ENCODE measurements at regions of chr3 and their contacts with region 1.

Region 1: DNA sequence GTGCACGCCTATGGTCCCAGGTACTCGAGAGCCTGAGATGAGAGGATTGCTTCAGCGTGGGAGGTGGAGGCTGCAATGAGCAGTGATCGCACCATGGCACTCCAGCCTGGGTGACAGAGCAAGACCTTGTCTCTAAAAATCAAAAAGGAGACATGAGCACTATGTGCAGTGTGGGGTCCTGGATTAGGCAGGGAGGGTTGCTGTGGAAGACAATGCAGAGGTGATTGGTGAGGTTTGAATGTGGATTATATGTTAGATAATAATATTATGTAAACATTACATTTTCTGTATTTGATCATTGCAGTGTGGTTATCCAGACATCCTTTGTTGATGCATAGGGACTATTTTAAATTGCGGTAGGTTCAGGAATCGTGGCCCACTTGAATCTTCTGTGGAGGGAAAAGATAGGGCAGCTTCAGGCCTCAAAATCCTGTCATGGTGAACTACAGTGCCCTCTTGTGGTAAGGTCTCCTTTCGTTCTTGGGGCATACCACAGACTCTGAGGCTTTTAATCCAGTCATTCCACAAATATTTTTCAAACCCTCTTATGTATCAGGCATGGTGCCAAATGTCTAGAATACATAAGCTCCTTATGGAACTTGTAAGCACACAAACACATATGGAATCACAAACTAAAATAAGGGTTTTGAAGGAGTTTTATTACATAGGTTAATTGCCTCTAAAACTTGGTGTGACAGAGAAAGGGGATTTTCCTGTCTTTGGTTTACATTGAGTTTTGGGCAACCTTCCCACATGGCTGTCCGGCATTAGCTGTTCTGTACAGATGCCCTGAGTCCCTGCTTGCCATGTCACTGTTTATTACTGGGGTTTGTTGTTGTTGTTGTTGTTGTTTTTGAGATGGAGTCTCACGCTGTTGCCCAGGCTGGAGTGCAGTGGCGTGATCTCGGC is 37.7 kb downstream of the GPD1L start:
- DNase-seq: peak in 3 of 6 donors; percentile 21 to 59 (median 32)
- ATAC-seq: peak in 3 of 4 donors; percentile 89 to 94 (median 90)
- H3K4me3 ChIP-seq: no peak overlapping the region
- H3K27ac ChIP-seq: no peak overlapping the region
- H3K4me1 ChIP-seq: no peaks in the 10 kb centered on the region
- H3K27me3 ChIP-seq: no peaks in the 10 kb centered on the region
- CTCF ChIP-seq: peak; percentile 25 to 66 (median 58)

Region 2: DNA sequence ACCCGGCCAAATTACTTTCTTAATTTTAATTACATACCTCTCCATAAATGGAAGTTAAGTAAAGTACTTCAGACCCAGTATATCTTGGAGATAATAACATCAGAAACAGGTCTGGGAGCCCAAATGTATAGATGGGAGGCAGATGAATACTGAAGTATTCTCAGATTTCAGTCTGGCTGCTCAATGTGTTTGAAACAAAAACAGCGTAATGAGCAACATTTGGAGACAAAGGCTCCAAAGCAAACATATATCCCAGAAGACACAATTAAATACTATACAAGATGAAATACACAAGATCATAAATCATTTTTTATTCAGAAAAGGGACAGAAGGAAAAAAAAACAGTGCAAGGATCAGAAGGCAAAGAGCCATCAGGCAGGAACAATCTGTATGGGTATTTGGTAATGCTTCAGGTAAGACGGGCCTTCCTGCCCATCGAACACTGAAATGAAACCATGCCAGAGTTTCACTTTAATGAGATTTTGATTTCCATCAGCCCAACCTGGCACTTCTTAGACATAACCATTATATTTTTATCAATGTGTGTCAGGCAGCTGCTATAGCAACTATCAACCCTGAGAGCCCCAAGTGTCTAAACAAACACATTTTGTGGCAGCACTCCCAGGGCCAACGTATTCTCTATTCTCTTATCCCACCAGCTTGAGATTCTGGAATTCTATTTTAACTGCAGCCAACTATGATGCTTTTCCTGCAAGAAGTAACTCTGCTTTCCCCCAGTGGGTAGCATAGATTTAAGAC is 400.6 kb before region 1 on chr3:
- intact Hi-C with region 1: no loop called
- DNase-seq: no peak
- ATAC-seq: peak in 3 of 4 donors; percentile 22 to 55 (median 51)
- H3K4me3 ChIP-seq: no peak overlapping the region
- H3K27ac ChIP-seq: no peak overlapping the region
- H3K4me1 ChIP-seq: no peaks in the 10 kb centered on the region
- H3K27me3 ChIP-seq: no peaks in the 10 kb centered on the region
- CTCF ChIP-seq: no peak

Region 3: DNA sequence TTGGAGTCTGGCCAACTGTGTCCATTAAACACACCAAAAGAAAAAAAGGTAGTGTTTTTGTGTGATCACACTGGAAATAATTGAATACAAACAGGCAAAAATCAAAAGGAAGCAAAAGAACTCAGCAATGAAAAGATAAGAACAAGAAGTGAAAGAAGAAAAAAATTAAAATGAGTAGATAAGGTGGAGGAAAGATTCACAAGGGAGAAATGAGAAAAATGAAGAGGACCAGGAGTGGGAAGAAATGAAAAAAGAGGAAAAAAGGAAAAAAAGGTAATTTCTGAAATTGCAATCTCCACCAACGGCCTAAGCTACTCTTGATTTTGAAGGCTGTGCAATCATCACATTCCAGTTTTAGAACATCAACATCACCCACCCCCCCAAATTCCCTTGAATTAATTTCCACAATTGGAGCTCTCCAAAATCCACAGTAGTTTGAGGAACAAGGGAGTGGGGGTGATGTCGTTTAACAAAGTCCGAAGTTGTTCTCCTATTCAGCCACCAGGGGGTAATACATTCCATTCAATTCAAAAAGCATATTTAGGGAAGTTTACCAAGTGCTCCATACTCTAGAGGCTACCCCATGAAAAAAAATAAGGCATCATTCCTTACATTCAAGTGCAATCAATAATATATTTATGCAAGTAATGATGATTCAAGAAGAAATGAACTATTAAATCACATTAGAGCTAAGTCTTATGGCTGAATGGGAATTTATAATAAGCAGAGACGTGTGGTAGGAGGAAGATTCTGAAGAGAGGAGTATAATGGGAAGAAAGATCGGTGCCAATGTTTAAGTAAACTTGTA is 125.1 kb before region 1 on chr3:
- intact Hi-C with region 1: loop called in 2 of 3 experiments (anchors 5 to 10 kb)
- DNase-seq: no peak
- ATAC-seq: peak; percentile 69 to 97 (median 95)
- H3K4me3 ChIP-seq: no peak overlapping the region
- H3K27ac ChIP-seq: no peak overlapping the region
- H3K4me1 ChIP-seq: no peaks in the 10 kb centered on the region
- H3K27me3 ChIP-seq: no peaks in the 10 kb centered on the region
- CTCF ChIP-seq: peak; percentile 37 to 65 (median 52)

Region 4: DNA sequence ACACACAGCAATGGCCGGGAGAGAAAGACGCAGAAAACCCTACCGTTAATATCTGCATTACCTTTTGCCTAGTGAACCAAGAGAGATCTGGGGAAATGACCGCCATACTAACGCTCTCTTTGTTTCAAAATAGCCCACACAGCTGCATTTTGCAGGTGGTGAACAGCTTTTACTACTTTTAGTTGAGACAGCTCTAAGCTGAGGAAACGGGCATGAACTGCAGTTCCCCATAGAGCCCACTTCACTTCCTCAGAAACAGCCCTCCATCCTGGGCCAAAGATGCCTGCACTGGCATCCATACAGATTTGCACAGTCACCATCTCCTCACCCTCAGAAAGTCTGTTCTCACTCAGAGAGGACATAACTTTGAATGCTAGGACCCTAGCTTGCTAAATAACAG is 117.5 kb before region 1 on chr3:
- intact Hi-C with region 1: loop called in 1 of 3 experiments (anchors 10 kb)
- DNase-seq: no peak
- ATAC-seq: no peak
- H3K4me3 ChIP-seq: no peak overlapping the region
- H3K27ac ChIP-seq: no peak overlapping the region
- H3K4me1 ChIP-seq: no peaks in the 10 kb centered on the region
- H3K27me3 ChIP-seq: no peaks in the 10 kb centered on the region
- CTCF ChIP-seq: no peak

Region 5: DNA sequence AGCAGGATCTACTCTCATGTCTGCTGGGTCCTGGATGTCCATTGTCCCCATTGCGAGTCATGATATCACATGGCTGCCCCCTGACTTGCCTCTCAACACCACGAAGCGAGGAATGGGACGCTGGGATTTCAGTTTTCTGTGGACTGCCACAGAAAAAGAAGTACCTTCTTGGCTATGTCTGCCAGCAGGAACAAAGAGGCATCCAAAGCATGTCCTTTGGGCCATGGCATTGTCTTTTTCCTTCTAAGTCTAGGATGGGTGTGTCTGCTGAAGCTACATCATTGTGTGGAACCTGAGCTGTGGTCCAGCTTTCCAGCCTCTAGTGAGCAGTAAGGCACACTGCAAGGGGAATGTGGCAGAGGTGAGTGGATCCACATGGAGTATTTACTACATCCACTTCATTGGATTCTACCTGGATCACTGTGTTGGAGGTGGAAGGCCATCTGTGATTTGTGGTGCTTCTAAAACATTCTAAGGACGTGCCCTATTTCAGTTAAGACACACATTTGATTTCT is 118.0 kb after region 1 on chr3:
- intact Hi-C with region 1: no loop called
- DNase-seq: no peak
- ATAC-seq: no peak
- H3K4me3 ChIP-seq: no peak overlapping the region
- H3K27ac ChIP-seq: no peak overlapping the region
- H3K4me1 ChIP-seq: no peaks in the 10 kb centered on the region
- H3K27me3 ChIP-seq: no peaks in the 10 kb centered on the region
- CTCF ChIP-seq: no peak